PC-9 (cell line): ENCODE measurements at regions of chr22 and their contacts with region 1.

Region 1: DNA sequence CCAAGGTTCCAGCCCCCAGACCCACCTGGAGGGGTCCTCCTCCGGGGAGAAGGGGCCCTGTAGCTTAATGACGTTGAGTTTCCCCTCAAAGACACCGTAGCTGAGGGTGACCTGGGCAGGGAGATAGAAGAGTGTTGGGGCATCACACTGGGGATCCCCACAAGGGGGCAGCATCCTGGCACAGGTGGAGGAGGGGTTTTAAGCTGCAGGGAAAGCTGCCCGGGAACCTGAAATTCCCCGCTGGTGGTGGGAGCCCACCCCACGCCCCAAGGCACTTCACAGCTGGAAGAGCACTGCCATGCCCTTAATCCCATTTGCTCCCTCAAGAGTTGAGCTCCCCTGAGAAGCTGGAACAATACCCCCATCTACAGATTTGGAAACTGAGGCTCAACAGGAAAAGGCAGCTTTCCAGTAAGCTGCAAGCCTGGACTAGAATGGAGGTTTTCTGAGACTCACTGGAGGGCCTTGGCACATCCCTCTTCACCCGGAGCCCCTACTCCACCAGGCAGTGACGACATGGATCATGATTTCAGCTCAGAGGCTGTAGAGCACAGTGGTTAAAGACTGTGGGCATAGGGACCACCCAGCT is 13.7 kb downstream of the MFNG start:
- DNase-seq: peak in 1 of 2 experiments; percentile 56
- H3K4me3 ChIP-seq: no peak overlapping the region
- H3K27ac ChIP-seq: no peak overlapping the region
- H3K4me1 ChIP-seq: no peaks in the 10 kb centered on the region
- H3K27me3 ChIP-seq: no peaks in the 10 kb centered on the region
- CTCF ChIP-seq: peak; percentile 88

Region 2: DNA sequence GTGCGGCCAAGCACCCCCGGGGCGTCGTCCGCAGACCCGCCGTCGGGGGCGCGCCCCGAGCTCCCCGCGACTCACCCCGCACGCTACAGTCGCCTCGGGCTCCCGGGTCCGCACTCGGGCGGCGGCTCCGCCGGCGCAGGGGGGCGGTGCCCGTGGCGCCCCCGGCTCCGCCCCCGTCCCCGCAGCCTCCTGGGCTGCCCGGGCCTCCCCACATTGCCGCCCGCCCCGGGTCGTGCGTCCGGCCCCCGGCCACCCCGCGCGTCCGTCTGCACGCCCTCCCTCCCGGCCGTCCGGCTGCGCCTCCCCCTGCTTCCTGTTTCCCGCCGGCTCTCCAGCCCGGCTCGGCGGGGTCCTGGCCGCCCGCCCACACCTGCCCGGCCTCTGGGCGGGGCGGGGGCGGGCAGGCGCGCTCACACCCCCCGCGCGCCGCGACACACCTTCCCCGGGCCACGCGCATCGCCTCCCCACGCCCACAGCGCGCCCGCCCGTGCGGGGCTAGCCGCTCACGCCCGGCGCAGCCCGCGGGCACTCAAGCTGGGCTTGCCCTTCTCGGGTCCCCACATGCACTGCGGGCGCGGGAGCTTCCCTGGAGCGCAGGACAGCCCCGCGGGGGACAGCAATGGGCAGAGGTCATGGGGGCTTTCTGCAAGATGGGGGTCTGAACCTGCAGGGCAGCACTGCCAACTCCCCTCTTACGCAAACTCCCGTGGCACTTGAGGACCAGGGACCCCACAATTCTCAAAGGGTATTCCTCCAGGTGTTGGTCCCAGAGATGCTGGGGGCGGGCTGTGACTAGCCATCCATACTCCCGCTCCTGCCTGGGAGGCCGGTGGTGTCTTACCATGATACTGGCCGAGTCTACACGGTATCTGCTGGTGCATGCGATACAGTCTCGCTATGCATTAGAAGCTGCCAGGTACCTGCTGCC is 47.0 kb after region 1 on chr22 and contains the start of gene CARD10:
- CTCF ChIA-PET with region 1: interaction called, 13 read pairs
- POLR2A ChIA-PET with region 1: no interaction called
- intact Hi-C with region 1: no loop called
- DNase-seq: peak in 1 of 2 experiments; percentile 74
- H3K4me3 ChIP-seq: peak within 1 kb of the TSS; percentile 76
- H3K27ac ChIP-seq: no peak within 1 kb of the TSS
- H3K4me1 ChIP-seq: peaks cover 19% of the 10 kb centered on the region
- H3K27me3 ChIP-seq: no peaks in the 10 kb centered on the region
- CTCF ChIP-seq: no peak
- total RNA-seq, gene CARD10: 63.9 and 76.7 TPM in 2 replicates

Region 3: GRCh38 chr22:37566903-37567820 is 94.7 kb after region 1 on chr22:
- CTCF ChIA-PET with region 1: interaction called, 10 read pairs
- POLR2A ChIA-PET with region 1: interaction called, 5 read pairs
- intact Hi-C with region 1: no loop called
- DNase-seq: peak; percentile 93 to 98
- H3K4me3 ChIP-seq: no peak overlapping the region
- H3K27ac ChIP-seq: peak overlapping the region; percentile 81
- H3K4me1 ChIP-seq: peaks cover 91% of the 10 kb centered on the region
- H3K27me3 ChIP-seq: no peaks in the 10 kb centered on the region
- CTCF ChIP-seq: peak; percentile 99

Region 4: GRCh38 chr22:37686002-37686982 is 213.8 kb after region 1 on chr22 and contains the start of gene NOL12:
- CTCF ChIA-PET with region 1: no interaction called
- POLR2A ChIA-PET with region 1: no interaction called
- intact Hi-C with region 1: no loop called
- DNase-seq: peak; percentile 83 to 86
- H3K4me3 ChIP-seq: peak within 1 kb of the TSS; percentile 94
- H3K27ac ChIP-seq: peak within 1 kb of the TSS; percentile 59
- H3K4me1 ChIP-seq: peaks cover 47% of the 10 kb centered on the region
- H3K27me3 ChIP-seq: no peaks in the 10 kb centered on the region
- CTCF ChIP-seq: 0 out of 2 replicates have a peak, but pooled peaks have one; percentile 26
- total RNA-seq, gene NOL12: 42.1 and 44.3 TPM in 2 replicates